PC-9 (cell line): ENCODE measurements at regions of chr9 and their contacts with region 1.

Region 1: GRCh38 chr9:113340017-113340699 is at the start of gene WDR31:
- DNase-seq: peak; percentile 68 to 93
- H3K4me3 ChIP-seq: peak within 1 kb of the TSS; percentile 80
- H3K27ac ChIP-seq: peak within 1 kb of the TSS; percentile 81
- H3K4me1 ChIP-seq: peaks cover 43% of the 10 kb centered on the region
- H3K27me3 ChIP-seq: no peaks in the 10 kb centered on the region
- CTCF ChIP-seq: no peak
- total RNA-seq, gene WDR31: 11.2 and 12.9 TPM in 2 replicates

Region 2: GRCh38 chr9:113150670-113151611 is 189.2 kb before region 1 on chr9 and contains the start of gene SLC31A2:
- CTCF ChIA-PET with region 1: no interaction called
- POLR2A ChIA-PET with region 1: no interaction called
- intact Hi-C with region 1: loop called (anchors 5 kb)
- DNase-seq: peak; percentile 72 to 93
- H3K4me3 ChIP-seq: peak within 1 kb of the TSS; percentile 77
- H3K27ac ChIP-seq: no peak within 1 kb of the TSS
- H3K4me1 ChIP-seq: peaks cover 31% of the 10 kb centered on the region
- H3K27me3 ChIP-seq: no peaks in the 10 kb centered on the region
- CTCF ChIP-seq: no peak; the same call in 1 of the 2 replicates
- total RNA-seq, gene SLC31A2: 15.1 and 16.5 TPM in 2 replicates

Region 3: GRCh38 chr9:113309204-113309813 is 30.8 kb before region 1 on chr9:
- CTCF ChIA-PET with region 1: no interaction called
- POLR2A ChIA-PET with region 1: interaction called, 4 read pairs
- intact Hi-C with region 1: loop called (anchors 2 kb)
- DNase-seq: peak; percentile 17 to 44
- H3K4me3 ChIP-seq: no peak overlapping the region
- H3K27ac ChIP-seq: no peak overlapping the region
- H3K4me1 ChIP-seq: no peaks in the 10 kb centered on the region; the same call in 1 of the 2 replicates
- H3K27me3 ChIP-seq: no peaks in the 10 kb centered on the region
- CTCF ChIP-seq: peak; percentile 82

Region 4: GRCh38 chr9:113401027-113401792 is 61.1 kb after region 1 on chr9 and contains the start of gene ALAD:
- CTCF ChIA-PET with region 1: interaction called, 9 read pairs
- POLR2A ChIA-PET with region 1: interaction called, 8 read pairs
- intact Hi-C with region 1: loop called (anchors 1 kb)
- DNase-seq: peak; percentile 93 to 100
- H3K4me3 ChIP-seq: peak within 1 kb of the TSS; percentile 75
- H3K27ac ChIP-seq: peak within 1 kb of the TSS; percentile 14; the same call in 1 of the 2 replicates
- H3K4me1 ChIP-seq: peaks cover 32% of the 10 kb centered on the region
- H3K27me3 ChIP-seq: no peaks in the 10 kb centered on the region
- CTCF ChIP-seq: peak; percentile 89
- total RNA-seq, gene ALAD: 33.3 and 42.7 TPM in 2 replicates

Region 5: DNA sequence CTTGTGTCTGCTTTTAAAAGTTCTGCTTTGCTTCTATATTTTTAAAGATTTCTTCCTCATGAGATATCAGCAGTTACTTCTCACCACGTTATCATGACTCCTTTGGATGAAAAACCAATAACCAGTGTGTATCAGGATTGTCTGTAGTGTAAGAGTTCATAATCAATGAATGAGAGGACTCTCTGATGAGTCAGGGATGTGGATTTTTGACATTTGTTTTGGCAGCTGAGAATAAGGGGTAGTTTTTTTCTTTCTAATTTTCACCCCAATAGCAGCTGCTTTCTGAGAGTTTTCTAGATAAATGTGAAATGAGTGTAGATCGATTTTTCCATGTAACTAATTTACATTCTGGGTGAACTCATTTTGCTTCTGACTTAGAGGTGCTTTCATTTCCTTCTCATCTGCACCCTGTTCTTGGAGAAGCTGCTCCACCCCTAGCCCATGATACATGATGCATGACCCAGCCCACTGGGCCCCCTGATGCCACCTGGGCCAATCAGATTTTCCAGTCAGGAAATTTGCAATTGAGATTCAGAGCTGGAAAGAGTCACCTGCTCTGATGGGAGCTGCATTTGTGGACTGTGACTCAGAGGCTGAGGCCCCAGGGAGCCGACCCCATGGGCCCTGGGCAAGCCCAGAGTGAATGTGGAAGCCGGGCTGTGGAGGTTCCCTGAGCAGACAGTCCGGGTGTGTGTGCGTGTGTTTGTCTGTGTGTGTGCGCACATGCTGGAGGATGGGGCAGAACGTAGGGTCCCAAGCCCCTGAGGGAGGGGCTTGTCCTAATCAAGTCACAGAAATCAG is 282.6 kb after region 1 on chr9:
- CTCF ChIA-PET with region 1: no interaction called
- POLR2A ChIA-PET with region 1: interaction called, 11 read pairs
- intact Hi-C with region 1: no loop called
- DNase-seq: peak; percentile 86
- H3K4me3 ChIP-seq: no peak overlapping the region
- H3K27ac ChIP-seq: peak overlapping the region; percentile 56
- H3K4me1 ChIP-seq: peaks cover 42% of the 10 kb centered on the region
- H3K27me3 ChIP-seq: no peaks in the 10 kb centered on the region
- CTCF ChIP-seq: no peak

Region 6: DNA sequence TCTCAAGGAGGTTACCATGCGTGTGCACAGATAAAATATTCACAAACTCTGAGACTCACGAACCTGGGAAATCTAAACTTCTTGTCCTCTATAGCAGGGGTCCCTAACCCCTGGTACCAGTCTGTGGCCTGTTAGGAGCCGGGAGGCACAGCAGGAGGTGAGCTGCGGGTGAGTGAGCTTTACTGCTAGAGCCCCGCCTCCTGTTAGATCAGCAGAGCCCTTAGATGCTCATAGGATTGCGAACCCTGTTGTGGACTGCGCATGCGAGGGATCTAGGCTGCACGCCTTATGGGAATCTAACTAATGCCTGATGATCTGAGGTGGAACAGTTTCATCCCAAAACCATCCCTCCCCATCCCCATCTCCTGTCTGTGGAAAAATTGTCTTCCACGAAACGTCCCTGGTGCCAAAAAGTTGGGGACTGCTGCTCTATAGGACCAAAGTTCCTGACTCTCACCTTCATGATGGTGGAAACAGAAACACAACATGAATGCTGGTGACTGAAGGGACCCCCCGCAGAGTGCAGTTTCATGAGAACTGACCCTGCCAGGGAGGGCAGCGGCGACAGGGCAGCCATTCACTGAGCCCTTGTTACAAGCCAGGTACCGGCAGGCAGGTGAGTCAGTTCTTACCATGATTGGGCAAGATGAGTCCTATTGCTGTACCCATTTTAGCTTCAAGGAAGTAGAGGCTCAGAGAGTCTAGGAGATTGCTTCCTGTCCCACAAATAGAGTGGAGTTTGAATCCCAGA is 305.2 kb after region 1 on chr9:
- CTCF ChIA-PET with region 1: no interaction called
- POLR2A ChIA-PET with region 1: no interaction called
- intact Hi-C with region 1: no loop called
- DNase-seq: no peak
- H3K4me3 ChIP-seq: no peak overlapping the region
- H3K27ac ChIP-seq: no peak overlapping the region
- H3K4me1 ChIP-seq: no peaks in the 10 kb centered on the region; the same call in 1 of the 2 replicates
- H3K27me3 ChIP-seq: no peaks in the 10 kb centered on the region
- CTCF ChIP-seq: no peak